WTC11 (cell line): ENCODE measurements at regions of chr1 and their contacts with region 1.

Region 1: GRCh38 chr1:222589462-222590302 is at the start of gene TAF1A:
- DNase-seq: peak; percentile 80
- ATAC-seq: peak; percentile 99
- H3K4me3 Mint-ChIP-seq: peak within 1 kb of the TSS; percentile 91
- H3K27ac Mint-ChIP-seq: peak within 1 kb of the TSS; percentile 92
- H3K4me1 Mint-ChIP-seq: peaks cover 19% of the 10 kb centered on the region
- H3K27me3 Mint-ChIP-seq: 0 out of 2 replicates have a peak, but pooled peaks cover 6% of the 10 kb centered on the region
- CTCF ChIP-seq: no peak
- total RNA-seq, gene TAF1A: 10.8 to 12.9 TPM (median 12.0 TPM) in 3 replicates

Region 2: GRCh38 chr1:222546548-222547259 is 43.0 kb before region 1 on chr1:
- CTCF ChIA-PET with region 1: no interaction called
- POLR2A ChIA-PET with region 1: no interaction called
- DNase-seq: no peak
- ATAC-seq: 0 out of 2 replicates have a peak, but pooled peaks have one; percentile 13
- H3K4me3 Mint-ChIP-seq: no peak overlapping the region
- H3K27ac Mint-ChIP-seq: no peak overlapping the region
- H3K4me1 Mint-ChIP-seq: 0 out of 2 replicates have a peak, but pooled peaks cover 6% of the 10 kb centered on the region
- H3K27me3 Mint-ChIP-seq: no peaks in the 10 kb centered on the region
- CTCF ChIP-seq: no peak

Region 3: DNA sequence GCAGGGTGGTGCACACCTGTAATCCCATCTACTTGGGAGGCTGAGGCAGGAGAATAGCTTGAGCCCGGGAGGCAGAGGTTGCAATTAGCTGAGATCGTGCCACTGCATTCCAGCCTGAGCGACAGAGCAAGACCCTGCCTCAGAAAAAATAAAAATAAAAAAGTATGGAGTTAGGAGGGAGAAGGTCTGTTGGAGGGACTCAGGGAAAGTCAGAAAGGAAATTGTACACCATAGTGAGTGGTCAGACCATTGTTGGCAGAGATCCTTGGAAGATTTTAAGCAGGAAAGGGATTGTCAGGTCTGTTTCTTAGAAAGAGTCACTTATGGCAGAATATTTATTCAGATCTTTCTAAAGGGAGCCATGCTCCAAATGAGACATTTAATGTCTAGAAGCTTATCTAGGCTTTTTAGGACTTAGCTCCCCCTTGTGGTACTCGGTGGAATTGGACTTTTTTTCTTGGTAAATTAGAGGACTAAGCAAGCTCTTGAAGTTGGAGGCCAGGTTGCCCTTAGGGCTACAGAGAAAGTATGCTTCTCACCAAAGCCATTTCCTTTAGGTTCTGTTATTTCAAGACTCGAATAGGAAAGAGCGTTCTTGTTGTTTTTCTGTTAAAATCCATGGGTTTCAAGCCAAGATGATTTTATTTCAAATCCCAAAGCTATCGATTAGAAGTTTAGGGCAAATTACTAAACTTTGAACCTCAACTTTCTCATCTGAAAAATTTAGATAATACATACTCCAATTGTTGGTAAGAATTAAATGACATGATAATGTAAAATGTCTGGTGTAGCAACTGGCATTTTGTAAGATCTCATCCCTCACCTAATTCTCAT is 44.7 kb after region 1 on chr1:
- CTCF ChIA-PET with region 1: interaction called, 16 read pairs
- POLR2A ChIA-PET with region 1: interaction called, 3 read pairs
- DNase-seq: peak; percentile 32
- ATAC-seq: peak; percentile 65
- H3K4me3 Mint-ChIP-seq: no peak overlapping the region
- H3K27ac Mint-ChIP-seq: no peak overlapping the region
- H3K4me1 Mint-ChIP-seq: no peaks in the 10 kb centered on the region
- H3K27me3 Mint-ChIP-seq: no peaks in the 10 kb centered on the region
- CTCF ChIP-seq: peak; percentile 76